A673 (cell line): ENCODE measurements at regions of chr13 and their contacts with region 1.

Region 1: DNA sequence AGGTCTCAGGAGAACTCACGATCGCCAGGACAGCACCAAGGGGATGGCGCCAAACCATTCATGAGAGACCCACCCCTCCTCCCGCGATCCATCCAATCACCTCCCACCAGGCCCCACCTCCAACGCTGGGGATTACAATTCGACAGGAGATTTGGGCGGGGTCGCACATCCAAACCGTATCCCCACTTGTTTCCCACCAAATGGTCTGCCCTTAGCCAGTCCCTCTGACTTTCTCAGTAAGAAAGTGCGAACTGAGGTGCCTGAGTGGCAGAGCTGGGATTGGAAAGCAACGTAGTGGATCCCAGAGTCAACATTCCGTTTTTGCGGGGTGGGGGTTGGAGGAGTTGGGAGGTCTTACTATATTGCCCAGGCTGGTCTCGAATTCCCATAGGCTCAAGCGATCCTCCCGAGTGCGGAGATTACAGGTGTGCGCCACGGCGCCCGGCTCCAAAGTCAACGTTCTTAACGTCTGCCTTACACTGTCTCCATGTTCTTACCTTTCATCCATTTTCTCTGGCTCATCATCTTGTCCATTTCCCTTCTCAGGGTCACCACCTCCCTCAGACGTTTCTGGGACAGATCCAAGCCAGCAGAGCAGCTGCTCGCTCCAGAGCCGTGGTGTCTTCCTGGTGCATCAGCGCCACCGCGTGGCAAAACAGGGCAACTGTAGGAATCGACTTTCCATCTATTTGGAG is 102.7 kb upstream of the ABCC4 start:
- DNase-seq: peak; percentile 89
- H3K4me3 ChIP-seq: peak overlapping the region; percentile 51
- H3K27ac ChIP-seq: peak overlapping the region; percentile 77
- H3K4me1 ChIP-seq: peaks cover 6% of the 10 kb centered on the region
- H3K27me3 ChIP-seq: no peaks in the 10 kb centered on the region
- CTCF ChIP-seq: peak; percentile 92

Region 2: GRCh38 chr13:94674609-94675348 is 729.2 kb before region 1 on chr13:
- CTCF ChIA-PET with region 1: interaction called, 3 read pairs
- POLR2A ChIA-PET with region 1: no interaction called
- intact Hi-C with region 1: loop called (anchors 2 kb)
- DNase-seq: peak; percentile 67
- H3K4me3 ChIP-seq: no peak overlapping the region
- H3K27ac ChIP-seq: no peak overlapping the region
- H3K4me1 ChIP-seq: no peaks in the 10 kb centered on the region
- H3K27me3 ChIP-seq: peaks cover 9% of the 10 kb centered on the region
- CTCF ChIP-seq: peak; percentile 84

Region 3: DNA sequence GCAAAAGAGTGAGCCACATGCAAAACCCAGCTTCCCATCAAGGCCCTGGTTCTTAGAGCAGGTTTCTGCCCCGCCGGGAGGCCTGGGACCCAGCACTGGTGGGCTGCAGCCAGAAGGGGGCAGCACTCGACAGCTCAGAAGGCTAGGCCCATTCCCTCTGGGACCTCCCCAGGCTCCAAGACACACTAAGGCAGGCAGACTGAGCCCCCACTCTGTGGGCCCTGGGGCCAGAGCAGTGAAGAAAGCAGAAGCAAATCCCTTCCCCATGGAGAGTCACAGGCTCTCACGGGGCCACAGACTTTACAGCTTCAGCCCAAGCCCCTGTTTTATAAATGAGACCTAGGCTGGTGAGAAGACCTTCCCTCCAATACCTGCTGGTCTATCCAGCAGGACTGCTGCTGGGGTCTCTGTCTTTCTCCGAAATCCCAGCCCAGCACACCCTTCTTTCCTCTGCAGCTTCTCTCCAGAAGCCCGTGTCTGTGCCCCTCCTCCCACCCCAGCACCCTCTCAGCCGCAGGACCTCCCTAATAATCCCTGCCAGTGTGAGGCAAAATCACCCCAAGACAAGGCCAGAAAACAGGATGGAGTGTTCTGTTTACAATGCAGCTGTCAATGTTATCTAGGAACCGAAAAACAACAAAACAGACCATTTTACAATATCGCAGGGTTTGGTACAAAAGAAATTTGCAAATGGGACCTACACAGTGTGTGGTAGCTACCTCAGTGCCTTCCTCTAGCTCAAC is 212.0 kb before region 1 on chr13:
- CTCF ChIA-PET with region 1: interaction called, 35 read pairs
- POLR2A ChIA-PET with region 1: interaction called, 6 read pairs
- intact Hi-C with region 1: loop called (anchors 1 kb)
- DNase-seq: peak; percentile 91
- H3K4me3 ChIP-seq: no peak overlapping the region
- H3K27ac ChIP-seq: peak overlapping the region; percentile 60
- H3K4me1 ChIP-seq: peaks cover 29% of the 10 kb centered on the region
- H3K27me3 ChIP-seq: no peaks in the 10 kb centered on the region
- CTCF ChIP-seq: peak; percentile 96

Region 4: GRCh38 chr13:95480131-95480545 is 76.2 kb after region 1 on chr13:
- CTCF ChIA-PET with region 1: no interaction called
- POLR2A ChIA-PET with region 1: no interaction called
- intact Hi-C with region 1: loop called (anchors 1 kb)
- DNase-seq: peak; percentile 16
- H3K4me3 ChIP-seq: no peak overlapping the region
- H3K27ac ChIP-seq: no peak overlapping the region
- H3K4me1 ChIP-seq: no peaks in the 10 kb centered on the region
- H3K27me3 ChIP-seq: no peaks in the 10 kb centered on the region
- CTCF ChIP-seq: no peak